Activated CD4-positive, alpha-beta memory T cell treated with anti-CD3 and anti-CD28 coated beads for 36 hours (primary cell): ENCODE measurements at regions of chr7 and their contacts with region 1.

Region 1: GRCh38 chr7:876167-876967 is at the start of gene GET4:
- DNase-seq: peak; percentile 96
- H3K4me3 Mint-ChIP-seq: peak within 1 kb of the TSS; percentile 95
- H3K27ac Mint-ChIP-seq: peak within 1 kb of the TSS; percentile 84
- H3K4me1 Mint-ChIP-seq: peaks cover 30% of the 10 kb centered on the region
- H3K27me3 Mint-ChIP-seq: no peaks in the 10 kb centered on the region
- total RNA-seq, gene GET4: 22.3 to 27.1 TPM

Region 2: DNA sequence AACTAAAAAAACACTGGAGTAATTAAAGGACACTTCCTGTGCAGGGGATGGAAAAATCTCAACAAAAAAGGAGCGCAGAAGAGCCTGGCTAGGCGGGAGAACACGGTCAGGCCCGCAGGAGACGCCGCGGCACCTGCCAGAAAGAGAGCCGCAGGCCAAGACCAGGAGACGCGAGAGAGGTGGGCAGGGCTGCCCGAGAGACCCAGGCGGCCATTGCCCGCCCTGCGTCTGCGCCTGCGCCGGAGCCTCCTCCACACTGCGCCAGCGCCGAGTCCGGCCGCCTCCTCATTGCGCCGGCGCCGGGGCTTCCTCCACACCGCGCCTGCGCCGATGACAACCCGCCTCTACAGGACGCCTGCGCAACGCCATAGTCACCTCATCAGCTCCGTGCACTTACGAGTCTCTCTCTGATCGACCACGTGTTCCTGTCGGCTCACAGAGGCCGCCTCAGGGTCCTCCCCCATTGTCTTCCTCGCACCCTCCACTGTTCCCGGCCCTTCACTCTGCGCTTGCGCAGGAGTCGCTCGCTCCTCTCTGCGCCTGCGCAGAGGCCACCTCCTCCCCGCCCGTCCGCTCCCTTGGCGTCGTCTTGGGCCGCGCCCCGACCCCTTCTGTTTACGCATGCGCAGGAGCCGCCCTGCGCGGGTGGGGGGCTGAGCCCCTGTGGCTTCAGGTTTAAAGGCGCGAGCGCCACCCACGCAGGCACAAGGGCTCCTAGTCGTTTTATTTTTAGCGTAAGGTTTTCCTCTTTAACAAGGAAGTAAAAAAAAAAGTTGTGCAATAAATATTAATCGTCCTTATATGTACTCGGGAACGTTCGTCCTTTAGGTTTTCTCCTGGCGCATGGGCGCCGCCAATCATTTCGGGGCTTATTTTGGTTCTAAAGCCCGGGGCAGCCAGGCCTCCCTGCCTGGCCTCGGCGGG is 727.2 kb before region 1 on chr7:
- CTCF ChIA-PET with region 1: no interaction called
- POLR2A ChIA-PET with region 1: no interaction called
- intact Hi-C with region 1: loop called (anchors 2 kb)
- DNase-seq: peak; percentile 98
- H3K4me3 Mint-ChIP-seq: peak overlapping the region; percentile 91
- H3K27ac Mint-ChIP-seq: peak overlapping the region; percentile 96
- H3K4me1 Mint-ChIP-seq: peaks cover 21% of the 10 kb centered on the region
- H3K27me3 Mint-ChIP-seq: no peaks in the 10 kb centered on the region

Region 3: DNA sequence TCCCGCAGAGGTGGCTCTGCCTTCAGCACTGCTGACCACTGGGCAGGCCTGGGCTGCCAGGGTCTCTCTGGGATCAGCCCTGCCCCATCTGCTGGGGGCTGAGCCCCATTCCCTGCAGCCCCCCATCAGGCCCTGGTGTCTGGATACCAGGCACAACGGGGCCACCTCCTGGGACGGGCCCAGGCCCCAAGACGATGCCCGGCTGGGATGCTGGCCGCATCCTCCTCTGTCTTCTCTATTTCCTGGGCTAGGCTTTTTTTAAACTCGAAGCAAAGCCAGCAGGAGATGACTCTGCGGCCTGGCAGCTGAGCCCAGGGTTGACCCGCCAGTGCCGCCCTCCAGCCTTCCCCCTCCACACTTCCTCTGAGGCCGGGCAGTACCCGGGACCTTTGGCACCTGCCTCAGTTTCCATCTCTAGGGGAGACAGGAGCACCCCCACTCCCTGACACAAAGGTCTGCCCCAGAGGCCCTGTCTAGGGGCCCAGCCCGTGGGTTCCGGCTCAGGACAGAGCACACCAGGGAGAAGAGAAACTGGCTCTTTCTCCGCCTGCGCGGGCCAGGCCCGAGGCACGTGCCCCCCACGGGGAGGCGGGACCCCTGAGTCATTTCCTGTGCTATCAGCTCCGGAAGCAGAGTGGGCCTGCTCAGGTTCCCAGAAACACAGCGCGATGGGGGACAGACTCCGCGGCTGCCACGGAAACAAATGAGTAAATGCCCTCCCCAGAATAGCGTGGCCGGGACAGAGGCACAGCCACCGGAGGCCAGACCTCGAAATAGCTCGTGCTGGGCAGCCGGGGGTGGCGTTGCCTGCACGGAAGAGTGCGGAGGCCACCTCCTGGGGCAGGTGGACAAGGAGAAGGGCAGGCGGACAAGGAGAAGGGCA is 272.1 kb before region 1 on chr7:
- CTCF ChIA-PET with region 1: interaction called, 3 read pairs
- POLR2A ChIA-PET with region 1: interaction called, 3 read pairs
- intact Hi-C with region 1: loop called (anchors 5 kb)
- DNase-seq: peak; percentile 98
- H3K4me3 Mint-ChIP-seq: peak overlapping the region; percentile 93
- H3K27ac Mint-ChIP-seq: peak overlapping the region; percentile 100
- H3K4me1 Mint-ChIP-seq: peaks cover 61% of the 10 kb centered on the region
- H3K27me3 Mint-ChIP-seq: no peaks in the 10 kb centered on the region

Region 4: DNA sequence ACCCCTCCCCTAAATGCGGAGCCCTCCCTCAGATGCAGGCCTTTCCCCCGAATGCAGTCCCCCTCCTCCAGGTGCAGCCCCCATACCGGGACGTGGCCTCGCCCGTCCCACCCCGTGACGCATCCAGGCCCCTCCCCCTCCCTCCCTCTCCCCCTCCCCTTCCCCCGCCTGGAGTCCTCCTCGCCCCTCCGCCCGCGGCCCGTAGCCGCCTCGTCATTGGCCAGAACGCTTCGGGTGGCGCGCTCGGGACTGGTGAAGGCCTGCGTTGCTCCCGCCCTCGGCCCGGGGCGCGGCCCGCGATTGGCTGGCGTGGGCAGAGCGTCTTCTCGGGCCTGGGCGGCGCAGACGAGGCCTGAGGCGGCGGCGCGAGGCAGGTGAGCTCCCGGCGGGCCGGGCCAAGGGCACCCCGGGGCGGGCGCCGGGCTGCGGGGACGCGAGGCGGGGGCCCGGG is 60.0 kb before region 1 on chr7:
- CTCF ChIA-PET with region 1: interaction called, 11 read pairs
- POLR2A ChIA-PET with region 1: interaction called, 6 read pairs
- intact Hi-C with region 1: loop called (anchors 2 kb)
- DNase-seq: peak; percentile 98
- H3K4me3 Mint-ChIP-seq: peak overlapping the region; percentile 71
- H3K27ac Mint-ChIP-seq: no peak overlapping the region
- H3K4me1 Mint-ChIP-seq: peaks cover 57% of the 10 kb centered on the region
- H3K27me3 Mint-ChIP-seq: peaks cover 9% of the 10 kb centered on the region

Region 5: DNA sequence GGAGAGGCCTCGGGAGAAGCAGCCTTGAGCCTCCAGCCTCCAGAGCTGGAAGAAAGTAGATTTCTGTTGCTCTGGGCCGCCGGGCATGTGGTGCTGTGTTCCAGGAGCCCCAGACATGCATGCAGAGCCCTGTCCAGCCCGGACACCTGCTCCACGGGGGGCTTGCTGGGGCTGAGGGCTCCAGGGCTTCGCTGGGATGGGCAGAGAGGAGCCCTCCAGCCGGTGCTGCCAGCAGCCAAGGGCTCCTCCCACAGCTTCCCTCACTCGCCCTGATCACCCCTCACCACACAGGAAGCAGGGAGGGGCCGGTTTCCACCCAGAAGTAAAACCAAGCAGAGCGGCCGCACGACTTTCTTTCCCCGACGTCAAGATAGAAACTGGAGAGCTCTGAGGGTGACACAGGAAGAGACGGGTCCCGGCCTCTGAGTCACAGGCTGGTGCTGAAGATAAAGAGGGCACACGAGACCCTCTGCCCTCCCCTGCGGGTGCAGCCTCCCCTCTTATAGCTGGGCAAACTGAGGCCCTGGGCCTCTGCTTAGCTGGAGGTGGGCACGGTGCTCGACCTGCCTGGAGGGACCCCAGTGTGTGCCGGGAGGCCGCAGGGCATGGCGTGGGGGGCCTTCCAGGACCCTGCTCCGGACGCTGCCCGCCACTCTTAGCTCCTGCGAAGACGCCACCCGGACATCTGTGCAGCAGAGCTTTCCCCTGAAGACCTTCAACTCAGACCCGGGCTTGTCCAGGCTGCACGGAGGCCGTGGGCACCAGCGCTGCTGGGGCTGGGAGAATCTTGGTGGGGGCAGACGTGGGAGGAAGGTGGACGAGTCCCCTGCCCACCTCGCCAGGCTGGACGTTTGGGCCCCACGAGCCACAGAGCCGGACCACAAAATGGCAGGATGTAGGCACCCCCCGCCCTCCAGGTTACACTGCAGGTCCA is 47.0 kb after region 1 on chr7:
- CTCF ChIA-PET with region 1: no interaction called
- POLR2A ChIA-PET with region 1: interaction called, 6 read pairs
- intact Hi-C with region 1: loop called (anchors 1 kb)
- DNase-seq: peak; percentile 98
- H3K4me3 Mint-ChIP-seq: peak overlapping the region; percentile 71
- H3K27ac Mint-ChIP-seq: peak overlapping the region; percentile 92
- H3K4me1 Mint-ChIP-seq: peaks cover 39% of the 10 kb centered on the region
- H3K27me3 Mint-ChIP-seq: no peaks in the 10 kb centered on the region

Region 6: GRCh38 chr7:974820-975681 is 98.7 kb after region 1 on chr7 and contains the start of gene COX19:
- CTCF ChIA-PET with region 1: interaction called, 4 read pairs
- POLR2A ChIA-PET with region 1: interaction called, 4 read pairs
- intact Hi-C with region 1: loop called (anchors 1 kb)
- DNase-seq: peak; percentile 94
- H3K4me3 Mint-ChIP-seq: peak within 1 kb of the TSS; percentile 95
- H3K27ac Mint-ChIP-seq: peak within 1 kb of the TSS; percentile 90
- H3K4me1 Mint-ChIP-seq: peaks cover 27% of the 10 kb centered on the region
- H3K27me3 Mint-ChIP-seq: no peaks in the 10 kb centered on the region
- total RNA-seq, gene COX19: 14.1 to 15.6 TPM